CD4-positive, alpha-beta T cell (primary cell): ENCODE measurements at regions of chr20 and their contacts with region 1.

Region 1: GRCh38 chr20:52083627-52084232 is 107.8 kb downstream of the ZFP64 start:
- DNase-seq: peak in 6 of 14 experiments; percentile 10 to 55 (median 40)
- ATAC-seq: no peak
- H3K4me3 ChIP-seq: no peak overlapping the region
- H3K4me3 Mint-ChIP-seq: no peak overlapping the region
- H3K27ac ChIP-seq: no peak overlapping the region
- H3K27ac Mint-ChIP-seq: no peak overlapping the region
- H3K4me1 ChIP-seq: no peaks in the 10 kb centered on the region
- H3K4me1 Mint-ChIP-seq: no peaks in the 10 kb centered on the region
- H3K27me3 ChIP-seq: no peaks in the 10 kb centered on the region
- H3K27me3 Mint-ChIP-seq: no peaks in the 10 kb centered on the region
- CTCF ChIP-seq: peak; percentile 25

Region 2: GRCh38 chr20:51639206-51639832 is 444.4 kb before region 1 on chr20:
- CTCF ChIA-PET with region 1: no interaction called
- POLR2A ChIA-PET with region 1: no interaction called
- intact Hi-C with region 1: loop called (anchors 1 to 2 kb)
- DNase-seq: peak; percentile 15 to 64 (median 30)
- ATAC-seq: no peak
- H3K4me3 ChIP-seq: no peak overlapping the region
- H3K4me3 Mint-ChIP-seq: no peak overlapping the region
- H3K27ac ChIP-seq: no peak overlapping the region
- H3K27ac Mint-ChIP-seq: no peak overlapping the region
- H3K4me1 ChIP-seq: no peaks in the 10 kb centered on the region
- H3K4me1 Mint-ChIP-seq: no peaks in the 10 kb centered on the region
- H3K27me3 ChIP-seq: peaks cover 0 to 4% of the 10 kb centered on the region in 2 experiments
- H3K27me3 Mint-ChIP-seq: peaks cover 8% of the 10 kb centered on the region
- CTCF ChIP-seq: peak; percentile 52

Region 3: GRCh38 chr20:51695574-51696303 is 388.0 kb before region 1 on chr20:
- CTCF ChIA-PET with region 1: no interaction called
- POLR2A ChIA-PET with region 1: no interaction called
- intact Hi-C with region 1: loop called (anchors 2 to 5 kb)
- DNase-seq: peak in 2 of 14 experiments; percentile 15 to 39
- ATAC-seq: no peak
- H3K4me3 ChIP-seq: no peak overlapping the region
- H3K4me3 Mint-ChIP-seq: no peak overlapping the region
- H3K27ac ChIP-seq: no peak overlapping the region
- H3K27ac Mint-ChIP-seq: no peak overlapping the region
- H3K4me1 ChIP-seq: no peaks in the 10 kb centered on the region
- H3K4me1 Mint-ChIP-seq: peaks cover 15% of the 10 kb centered on the region
- H3K27me3 ChIP-seq: peaks cover 0 to 5% of the 10 kb centered on the region in 2 experiments
- H3K27me3 Mint-ChIP-seq: peaks cover 21% of the 10 kb centered on the region
- CTCF ChIP-seq: no peak

Region 4: DNA sequence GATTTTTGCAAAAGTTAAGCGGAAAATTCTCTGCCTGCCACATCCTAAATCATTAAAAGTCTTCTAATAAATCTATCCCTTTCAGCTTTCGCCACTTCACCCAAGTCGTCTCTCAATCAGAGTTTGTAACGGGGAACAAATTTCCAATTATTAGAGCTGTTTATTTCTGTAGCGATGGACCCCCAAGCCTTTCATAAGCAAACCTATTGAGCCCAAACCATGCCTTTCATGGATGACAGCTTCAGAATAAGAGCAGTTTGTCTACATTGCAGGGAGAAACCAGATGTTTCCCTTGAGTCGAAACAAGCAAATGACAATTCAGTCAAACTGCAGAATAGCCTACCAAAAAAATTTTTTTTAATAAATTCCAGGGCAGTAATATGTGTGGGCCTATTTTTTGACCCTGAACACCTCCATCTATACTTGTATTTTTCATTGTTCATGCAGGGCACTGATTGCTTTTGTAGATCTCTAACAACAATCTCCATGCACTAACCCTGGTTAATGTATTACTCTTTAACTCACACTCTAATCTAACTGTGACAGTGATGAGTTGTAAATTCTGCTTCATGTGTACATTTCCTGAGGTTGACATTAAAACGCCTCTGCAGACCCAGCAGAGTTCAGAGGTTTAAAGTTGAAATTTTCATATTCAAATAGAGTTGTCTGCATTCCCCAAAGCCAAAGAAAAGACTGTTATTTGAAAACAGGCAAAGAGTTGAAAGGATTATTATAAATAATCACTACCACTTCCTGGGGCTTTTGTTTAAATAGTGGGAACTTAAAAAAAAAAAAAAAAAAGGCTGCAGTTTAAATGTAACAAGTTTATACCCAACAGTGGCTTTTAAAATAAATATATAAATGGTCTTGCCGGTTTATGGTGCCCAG is 380.1 kb before region 1 on chr20:
- CTCF ChIA-PET with region 1: no interaction called
- POLR2A ChIA-PET with region 1: no interaction called
- intact Hi-C with region 1: loop called (anchors 2 to 5 kb)
- DNase-seq: no peak
- ATAC-seq: no peak
- H3K4me3 ChIP-seq: no peak overlapping the region
- H3K4me3 Mint-ChIP-seq: no peak overlapping the region
- H3K27ac ChIP-seq: no peak overlapping the region
- H3K27ac Mint-ChIP-seq: no peak overlapping the region
- H3K4me1 ChIP-seq: no peaks in the 10 kb centered on the region
- H3K4me1 Mint-ChIP-seq: no peaks in the 10 kb centered on the region
- H3K27me3 ChIP-seq: no peaks in the 10 kb centered on the region
- H3K27me3 Mint-ChIP-seq: peaks cover 6% of the 10 kb centered on the region
- CTCF ChIP-seq: no peak

Region 5: DNA sequence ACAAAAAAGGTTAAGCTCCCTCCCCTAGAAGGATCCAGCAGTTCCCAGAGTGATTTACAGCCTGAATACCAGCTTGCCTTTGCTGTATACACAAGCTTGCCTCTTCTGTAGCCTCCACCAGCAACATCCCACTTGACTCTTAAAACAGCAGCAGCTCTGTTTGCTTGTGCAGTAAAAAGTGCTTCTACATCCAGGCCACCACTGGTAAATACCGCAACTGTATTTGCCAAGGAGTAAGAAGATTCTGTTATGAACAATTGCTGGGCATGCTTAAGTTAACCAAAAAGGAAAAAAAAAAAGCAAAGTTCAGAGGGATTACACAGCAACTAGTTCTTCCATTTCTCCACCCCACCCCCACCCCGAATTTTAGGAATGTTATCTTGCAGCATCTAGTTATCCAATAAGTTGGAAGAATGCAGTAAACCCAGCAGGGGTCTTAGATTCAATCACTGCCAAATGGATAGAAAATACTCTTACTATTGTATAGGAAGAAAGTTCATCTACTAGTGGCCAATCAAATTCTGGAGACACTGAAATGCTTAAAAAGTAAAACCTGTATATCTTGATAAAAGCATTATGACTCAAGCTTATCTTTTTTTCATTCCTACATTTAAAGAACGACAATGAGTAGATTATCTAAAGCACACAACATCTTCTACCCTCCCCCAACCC is 286.2 kb before region 1 on chr20:
- CTCF ChIA-PET with region 1: no interaction called
- POLR2A ChIA-PET with region 1: no interaction called
- intact Hi-C with region 1: loop called in 1 of 2 experiments (anchors 10 kb)
- DNase-seq: no peak
- ATAC-seq: no peak
- H3K4me3 ChIP-seq: no peak overlapping the region
- H3K4me3 Mint-ChIP-seq: no peak overlapping the region
- H3K27ac ChIP-seq: no peak overlapping the region
- H3K27ac Mint-ChIP-seq: no peak overlapping the region
- H3K4me1 ChIP-seq: peaks cover 15% of the 10 kb centered on the region
- H3K4me1 Mint-ChIP-seq: peaks cover 14% of the 10 kb centered on the region
- H3K27me3 ChIP-seq: peaks cover 24 to 45% of the 10 kb centered on the region in 2 experiments
- H3K27me3 Mint-ChIP-seq: peaks cover 65% of the 10 kb centered on the region
- CTCF ChIP-seq: no peak

Region 6: DNA sequence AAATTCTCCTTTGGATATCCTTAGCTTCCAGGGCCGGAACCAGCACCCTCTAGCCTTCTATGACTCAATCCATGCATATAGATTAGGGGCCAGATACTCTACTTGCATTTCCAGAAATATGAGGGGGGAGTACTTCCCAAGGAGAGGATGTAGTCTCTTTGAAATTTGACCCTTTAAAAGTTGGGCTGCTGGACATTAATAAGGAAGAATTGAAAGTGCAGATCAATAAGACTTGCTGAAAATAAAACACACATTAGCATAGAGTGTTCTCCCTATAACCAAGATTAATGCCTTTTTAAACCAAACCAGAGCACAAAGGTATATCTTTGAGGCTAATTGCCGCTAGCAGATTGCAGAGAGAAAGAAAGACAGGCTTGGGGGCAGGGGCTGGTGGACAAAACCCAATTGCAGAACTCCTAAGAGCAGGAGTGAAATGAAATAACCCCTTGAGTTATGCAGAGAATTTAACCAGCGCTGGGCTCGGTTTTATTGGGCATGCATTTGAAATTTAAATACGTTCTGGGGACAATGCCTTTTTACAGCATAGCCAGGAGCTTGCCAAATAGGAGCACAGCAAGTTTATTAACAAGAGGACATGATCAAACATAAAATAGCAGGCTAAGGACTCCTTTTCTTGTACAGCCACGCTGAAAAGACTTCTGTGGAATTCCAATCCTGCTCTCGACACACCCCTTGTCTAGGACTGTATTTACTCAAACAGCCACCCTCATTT is 173.2 kb before region 1 on chr20:
- CTCF ChIA-PET with region 1: no interaction called
- POLR2A ChIA-PET with region 1: no interaction called
- intact Hi-C with region 1: no loop called
- DNase-seq: no peak
- ATAC-seq: no peak
- H3K4me3 ChIP-seq: no peak overlapping the region
- H3K4me3 Mint-ChIP-seq: no peak overlapping the region
- H3K27ac ChIP-seq: no peak overlapping the region
- H3K27ac Mint-ChIP-seq: no peak overlapping the region
- H3K4me1 ChIP-seq: no peaks in the 10 kb centered on the region
- H3K4me1 Mint-ChIP-seq: no peaks in the 10 kb centered on the region
- H3K27me3 ChIP-seq: peaks cover 0 to 3% of the 10 kb centered on the region in 2 experiments
- H3K27me3 Mint-ChIP-seq: peaks cover 21% of the 10 kb centered on the region
- CTCF ChIP-seq: no peak